ENCODE measurements at regions of chr1 and their contacts with region 1.

Region 1: DNA sequence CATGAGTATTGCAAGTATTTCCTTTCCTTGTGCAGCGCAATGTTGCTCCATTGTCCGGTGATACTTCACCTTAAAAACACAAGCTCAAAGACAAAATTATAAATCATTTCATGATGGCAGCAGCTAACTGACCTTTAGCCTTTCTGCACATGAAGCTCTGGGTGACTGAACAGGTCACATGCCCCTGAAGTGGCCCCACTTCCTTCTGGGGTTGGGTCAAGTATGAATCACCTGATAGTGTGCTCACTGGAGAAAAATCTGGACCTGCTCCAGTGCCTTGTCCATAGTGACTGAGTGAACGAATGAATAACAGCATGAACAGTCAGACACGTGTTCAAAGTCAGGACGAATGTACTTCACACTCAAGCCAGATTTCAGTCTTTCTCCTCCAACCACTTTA is 658.9 kb downstream of the NPHP4 start:
- DNase-seq: no peak
- ATAC-seq: no peak
- H3K4me3 ChIP-seq: no peak overlapping the region
- H3K27ac ChIP-seq: no peak overlapping the region
- H3K4me1 ChIP-seq: no peaks in the 10 kb centered on the region
- H3K27me3 ChIP-seq: no peaks in the 10 kb centered on the region
- CTCF ChIP-seq: no peak
- POLR2A ChIP-seq: no peak

Region 2: GRCh38 chr1:5287178-5288150 is 45.8 kb before region 1 on chr1:
- intact Hi-C with region 1: no loop called
- DNase-seq: no peak
- ATAC-seq: peak in 1 of 4 donors; percentile 47
- H3K4me3 ChIP-seq: no peak overlapping the region
- H3K27ac ChIP-seq: no peak overlapping the region
- H3K4me1 ChIP-seq: no peaks in the 10 kb centered on the region
- H3K27me3 ChIP-seq: peaks cover 0 to 21% (median 0%) of the 10 kb centered on the region in 9 donors
- CTCF ChIP-seq: no peak
- POLR2A ChIP-seq: no peak

Region 3: DNA sequence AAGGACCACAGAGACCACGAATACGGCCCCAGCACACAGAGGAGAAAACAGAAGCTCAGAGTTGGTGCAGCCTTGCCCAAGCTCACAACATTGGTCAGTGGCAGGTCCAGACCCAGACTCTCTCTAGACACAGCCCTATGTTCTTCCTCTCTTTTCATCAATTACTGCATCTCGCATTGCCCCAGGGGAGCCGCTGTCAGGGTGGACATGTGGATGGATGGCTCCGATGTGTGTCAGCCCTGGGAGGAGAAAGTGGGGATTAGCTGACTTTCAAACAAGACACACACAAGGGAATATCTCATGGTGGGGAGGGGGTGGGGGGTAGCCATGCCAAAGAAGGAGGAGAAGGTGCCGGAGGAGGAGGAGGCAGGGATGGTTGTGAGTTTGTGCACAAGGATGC is 102.1 kb after region 1 on chr1:
- intact Hi-C with region 1: loop called in 1 of 10 experiments (anchors 5 kb)
- DNase-seq: no peak
- ATAC-seq: no peak
- H3K4me3 ChIP-seq: no peak overlapping the region
- H3K27ac ChIP-seq: no peak overlapping the region
- H3K4me1 ChIP-seq: no peaks in the 10 kb centered on the region
- H3K27me3 ChIP-seq: peaks cover 0 to 46% (median 9%) of the 10 kb centered on the region in 9 donors
- CTCF ChIP-seq: no peak
- POLR2A ChIP-seq: no peak